ENCODE measurements at regions of chr2 and their contacts with region 1.

Region 1: GRCh38 chr2:85678794-85679672 is 11.0 kb upstream of the SFTPB start:
- DNase-seq: peak; percentile 38 to 97
- H3K4me3 ChIP-seq: peak overlapping the region in 1 of 4 experiments; percentile 45; a peak in 1 of 8 replicates
- H3K27ac ChIP-seq: no peak overlapping the region
- H3K4me1 ChIP-seq: peaks cover 0 to 7% (median 1%) of the 10 kb centered on the region in 4 experiments; a peak in 1 of 7 replicates
- H3K27me3 ChIP-seq: no peaks in the 10 kb centered on the region; a peak in 1 of 7 replicates
- CTCF ChIP-seq: peak; percentile 95 to 99 (median 98)
- EP300 ChIP-seq: no peak
- POLR2A ChIP-seq: no peak
- RAD21 ChIP-seq: peak; percentile 86 to 90

Region 2: GRCh38 chr2:85662899-85663593 is 16.0 kb before region 1 on chr2:
- CTCF ChIA-PET with region 1: interaction called, 13 read pairs
- POLR2A ChIA-PET with region 1: interaction called, 9 read pairs
- DNase-seq: peak in 1 of 2 experiments; percentile 25
- H3K4me3 ChIP-seq: no peak overlapping the region
- H3K27ac ChIP-seq: no peak overlapping the region
- H3K4me1 ChIP-seq: peaks cover 0 to 3% (median under 1%) of the 10 kb centered on the region in 4 experiments; a peak in 2 of 7 replicates
- H3K27me3 ChIP-seq: no peaks in the 10 kb centered on the region
- CTCF ChIP-seq: no peak
- EP300 ChIP-seq: no peak
- POLR2A ChIP-seq: no peak
- RAD21 ChIP-seq: no peak

Region 3: GRCh38 chr2:85694052-85695025 is 15.3 kb after region 1 on chr2 and contains the start of gene GNLY:
- CTCF ChIA-PET with region 1: interaction called, 49 read pairs
- POLR2A ChIA-PET with region 1: interaction called, 5 read pairs
- DNase-seq: no peak
- H3K4me3 ChIP-seq: no peak within 1 kb of the TSS
- H3K27ac ChIP-seq: no peak within 1 kb of the TSS
- H3K4me1 ChIP-seq: peaks cover 0 to 2% (median 0%) of the 10 kb centered on the region in 4 experiments; a peak in 1 of 7 replicates
- H3K27me3 ChIP-seq: no peaks in the 10 kb centered on the region
- CTCF ChIP-seq: no peak
- EP300 ChIP-seq: no peak
- POLR2A ChIP-seq: no peak
- RAD21 ChIP-seq: no peak
- total RNA-seq, gene GNLY: not detected in 2 replicates

Region 4: GRCh38 chr2:85718009-85718391 is 39.0 kb after region 1 on chr2:
- CTCF ChIA-PET with region 1: interaction called, 18 read pairs
- POLR2A ChIA-PET with region 1: no interaction called
- DNase-seq: no peak
- H3K4me3 ChIP-seq: no peak overlapping the region
- H3K27ac ChIP-seq: no peak overlapping the region
- H3K4me1 ChIP-seq: no peaks in the 10 kb centered on the region
- H3K27me3 ChIP-seq: no peaks in the 10 kb centered on the region; a peak in 1 of 7 replicates
- CTCF ChIP-seq: no peak
- EP300 ChIP-seq: no peak
- POLR2A ChIP-seq: no peak
- RAD21 ChIP-seq: peak in 1 of 2 experiments; percentile 23; a peak in 2 of 4 replicates

Region 5: DNA sequence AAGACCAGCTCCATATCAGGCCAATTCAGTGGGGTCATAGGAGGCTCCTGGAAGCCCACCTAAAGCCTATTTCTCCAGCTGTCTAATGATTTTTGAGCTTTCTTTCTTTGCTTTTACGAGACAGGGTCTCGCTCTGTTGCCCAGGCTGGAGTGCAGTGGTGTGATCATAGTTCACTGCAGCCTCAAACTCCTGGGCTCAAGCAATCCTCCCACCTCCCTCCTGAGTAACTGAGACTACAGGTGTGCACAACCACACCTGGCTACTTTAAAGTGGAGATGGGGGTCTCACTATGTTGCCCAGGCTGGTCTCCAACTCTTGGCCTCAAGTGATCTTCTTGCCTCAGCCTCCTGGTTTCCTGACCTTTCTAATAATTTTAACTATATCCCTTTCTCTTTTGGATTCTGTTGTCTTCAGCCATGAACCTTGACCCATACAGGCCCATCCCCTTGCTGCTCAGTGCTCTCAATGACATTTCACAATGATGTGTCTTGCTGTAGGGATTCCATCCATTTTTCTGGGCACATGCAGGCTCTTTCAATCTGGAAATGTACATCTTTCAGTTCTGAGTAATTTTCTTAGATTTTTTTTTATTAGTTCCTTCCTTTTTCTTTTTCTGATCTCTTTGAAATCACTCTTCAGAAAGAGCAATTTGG is 44.8 kb after region 1 on chr2:
- CTCF ChIA-PET with region 1: interaction called, 18 read pairs
- POLR2A ChIA-PET with region 1: no interaction called
- DNase-seq: no peak
- H3K4me3 ChIP-seq: no peak overlapping the region
- H3K27ac ChIP-seq: no peak overlapping the region
- H3K4me1 ChIP-seq: no peaks in the 10 kb centered on the region
- H3K27me3 ChIP-seq: no peaks in the 10 kb centered on the region
- CTCF ChIP-seq: no peak
- EP300 ChIP-seq: no peak
- POLR2A ChIP-seq: no peak
- RAD21 ChIP-seq: no peak